ENCODE measurements at regions of chr10 and their contacts with region 1.

Region 1: GRCh38 chr10:86399879-86400704 is 33.5 kb upstream of the GRID1 start:
- DNase-seq: peak; percentile 80 to 96 (median 90)
- ATAC-seq: peak; percentile 87 to 91 (median 89)
- H3K4me3 ChIP-seq: peak overlapping the region; percentile 74 to 90
- H3K4me3 Mint-ChIP-seq: peak overlapping the region; percentile 82 to 88 (median 84)
- H3K27ac ChIP-seq: peak overlapping the region; percentile 75
- H3K27ac Mint-ChIP-seq: peak overlapping the region; percentile 89 to 93
- H3K4me1 ChIP-seq: peaks cover 0 to 30% of the 10 kb centered on the region in 2 experiments
- H3K4me1 Mint-ChIP-seq: peaks cover 15 to 22% (median 17%) of the 10 kb centered on the region in 3 donors
- H3K27me3 ChIP-seq: peaks cover 0 to 6% of the 10 kb centered on the region in 2 experiments
- H3K27me3 Mint-ChIP-seq: no peaks in the 10 kb centered on the region

Region 2: GRCh38 chr10:86585037-86585725 is 185.1 kb after region 1 on chr10:
- CTCF ChIA-PET with region 1: interaction called, 13 to 40 read pairs
- POLR2A ChIA-PET with region 1: no interaction called
- DNase-seq: peak; percentile 37 to 84 (median 62)
- ATAC-seq: peak; percentile 91 to 98 (median 94)
- H3K4me3 ChIP-seq: no peak overlapping the region
- H3K4me3 Mint-ChIP-seq: no peak overlapping the region
- H3K27ac ChIP-seq: no peak overlapping the region
- H3K27ac Mint-ChIP-seq: no peak overlapping the region
- H3K4me1 ChIP-seq: peaks cover 0 to 8% of the 10 kb centered on the region in 2 experiments
- H3K4me1 Mint-ChIP-seq: peaks cover 0 to 3% (median 2%) of the 10 kb centered on the region in 3 donors
- H3K27me3 ChIP-seq: peaks cover 2 to 14% of the 10 kb centered on the region in 2 experiments
- H3K27me3 Mint-ChIP-seq: no peaks in the 10 kb centered on the region

Measured in T-cell (primary cell).